ENCODE measurements at regions of chr12 and their contacts with region 1.

Region 1: DNA sequence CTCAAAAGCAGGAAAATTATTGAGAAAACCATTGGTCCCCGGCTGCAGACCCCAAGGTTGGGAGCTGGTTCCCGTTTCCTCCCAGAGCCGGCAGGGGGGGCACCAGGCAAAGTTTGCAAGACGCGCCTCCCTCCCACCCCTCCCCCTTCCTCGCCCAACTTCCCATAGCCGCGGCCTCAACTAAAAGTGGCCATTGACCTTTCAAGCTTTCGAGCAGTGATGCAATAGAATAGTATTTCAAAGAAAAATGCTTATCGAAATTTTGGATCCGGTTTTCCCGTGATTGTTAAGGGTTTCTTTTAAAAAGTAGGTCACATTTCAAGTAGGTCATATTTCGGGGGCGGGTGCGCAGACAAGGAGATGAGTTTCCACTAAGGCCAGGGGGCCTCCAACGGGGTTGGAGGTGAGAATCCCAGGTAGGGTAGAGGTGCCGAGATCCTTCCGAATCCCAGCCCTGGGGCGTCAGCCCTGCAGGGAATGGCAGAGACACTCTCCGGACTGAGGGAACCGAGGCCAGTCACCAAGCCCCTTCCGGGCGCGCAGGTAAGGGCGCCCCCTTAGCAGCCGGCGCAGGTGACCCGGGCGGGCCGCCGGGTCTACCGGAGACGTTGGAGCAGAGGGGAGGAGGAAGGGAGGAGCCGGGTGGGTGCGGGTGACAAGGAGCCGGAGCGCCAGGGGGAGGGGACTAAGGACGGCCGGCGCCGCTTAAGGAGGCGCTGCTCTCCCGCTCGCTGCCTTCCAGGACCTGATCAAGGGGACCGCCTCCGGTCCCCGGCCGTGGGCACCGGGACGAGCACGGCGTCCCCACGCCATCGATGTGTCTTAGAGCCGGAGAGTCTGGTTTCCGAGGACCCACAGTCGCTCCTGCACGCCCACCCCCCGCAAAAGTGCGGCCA is 2.6 kb upstream of the SOCS2 start:
- DNase-seq: peak; percentile 68
- H3K4me3 Mint-ChIP-seq: peak overlapping the region; percentile 88
- H3K27ac Mint-ChIP-seq: peak overlapping the region; percentile 77
- H3K4me1 Mint-ChIP-seq: peaks cover 42% of the 10 kb centered on the region
- H3K27me3 Mint-ChIP-seq: peaks cover 15% of the 10 kb centered on the region

Region 2: GRCh38 chr12:93042283-93042682 is 527.6 kb before region 1 on chr12:
- intact Hi-C with region 1: no loop called
- DNase-seq: no peak
- H3K4me3 Mint-ChIP-seq: no peak overlapping the region
- H3K27ac Mint-ChIP-seq: no peak overlapping the region
- H3K4me1 Mint-ChIP-seq: no peaks in the 10 kb centered on the region
- H3K27me3 Mint-ChIP-seq: no peaks in the 10 kb centered on the region

Region 3: DNA sequence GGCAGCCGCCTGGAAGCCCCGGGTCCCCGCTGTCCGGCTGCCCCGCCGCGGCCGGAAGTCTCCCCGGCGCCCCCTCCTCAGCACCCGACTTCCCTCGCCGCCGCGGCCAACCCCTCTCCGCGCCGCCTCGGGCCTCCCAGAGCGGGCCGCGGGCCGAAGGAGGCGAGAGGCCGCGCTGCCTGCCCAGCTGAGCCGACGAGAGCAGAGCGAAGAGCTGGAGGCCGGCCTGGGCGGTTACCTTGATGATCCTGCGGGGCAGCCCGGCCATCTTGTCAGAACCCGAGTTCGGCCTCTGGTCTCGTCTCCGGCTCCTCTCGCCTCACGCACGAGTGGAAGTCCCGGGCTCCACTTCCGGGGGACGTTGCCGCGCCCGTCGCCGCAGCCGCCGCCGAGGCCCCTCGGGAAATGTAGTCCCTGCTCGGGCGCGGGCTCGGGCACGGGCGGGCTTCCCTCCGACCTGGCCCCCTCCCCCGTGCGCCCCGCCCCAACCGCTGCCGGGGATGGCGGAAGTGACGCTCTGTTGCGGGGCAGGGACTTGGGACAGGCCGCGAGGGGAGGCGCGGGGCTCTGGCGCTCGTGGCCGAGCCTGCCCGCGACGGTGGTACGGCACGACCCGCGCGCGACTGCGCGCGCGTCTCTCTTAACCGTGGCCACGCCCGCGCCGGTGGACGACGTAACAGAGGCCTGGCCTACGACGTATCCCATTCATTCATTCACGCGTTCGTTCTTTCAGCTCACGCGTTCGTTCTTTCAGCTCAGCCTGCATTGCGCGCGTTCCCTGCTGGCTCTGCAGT is 128.1 kb before region 1 on chr12 and contains the start of gene UBE2N:
- intact Hi-C with region 1: loop called (anchors 1 kb)
- DNase-seq: peak; percentile 95
- H3K4me3 Mint-ChIP-seq: peak within 1 kb of the TSS; percentile 96
- H3K27ac Mint-ChIP-seq: peak within 1 kb of the TSS; percentile 99
- H3K4me1 Mint-ChIP-seq: peaks cover 51% of the 10 kb centered on the region
- H3K27me3 Mint-ChIP-seq: no peaks in the 10 kb centered on the region
- total RNA-seq, gene UBE2N: 231 and 239 TPM in 2 replicates

Region 4: DNA sequence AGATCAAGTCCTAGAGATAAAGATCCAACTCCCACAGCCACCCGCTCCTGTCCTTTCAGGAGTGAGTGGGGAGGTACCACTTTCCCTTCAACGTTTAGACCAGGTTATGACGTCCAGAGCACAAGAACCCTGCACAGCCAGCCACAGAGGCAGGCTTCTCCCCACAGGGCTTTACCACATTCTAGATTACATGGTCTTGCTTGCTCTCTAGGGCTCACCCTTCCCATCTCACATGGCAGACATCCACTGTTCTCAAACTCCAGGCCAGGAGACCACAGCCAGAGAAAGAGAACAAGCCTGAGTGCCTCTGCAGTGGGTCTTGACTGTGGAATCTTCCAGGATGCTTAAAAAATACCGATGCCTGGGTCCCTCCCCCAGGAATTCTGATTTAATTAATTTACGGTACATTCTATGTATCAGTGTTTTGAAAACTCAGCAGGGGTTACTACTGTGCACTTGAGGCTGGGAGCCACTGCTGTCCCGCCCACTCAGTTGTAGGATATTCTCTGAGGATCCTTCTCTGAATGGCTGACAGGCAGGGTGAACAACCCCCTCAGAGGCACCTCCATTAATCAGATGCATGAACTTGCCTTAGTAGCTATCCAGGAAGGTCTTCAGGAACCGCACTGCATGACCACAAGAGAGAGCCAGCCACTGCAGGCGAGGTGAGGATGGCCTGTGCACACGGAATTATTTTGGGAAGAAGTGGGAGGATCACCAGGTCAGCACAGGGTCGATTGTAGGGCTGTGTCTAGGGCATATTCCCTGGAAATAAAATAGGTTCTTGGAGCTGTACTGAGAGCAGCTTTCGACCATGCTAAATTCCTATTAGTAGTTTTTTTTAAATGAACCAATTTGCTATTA is 18.9 kb before region 1 on chr12:
- intact Hi-C with region 1: no loop called
- DNase-seq: no peak
- H3K4me3 Mint-ChIP-seq: no peak overlapping the region
- H3K27ac Mint-ChIP-seq: no peak overlapping the region
- H3K4me1 Mint-ChIP-seq: peaks cover 3% of the 10 kb centered on the region
- H3K27me3 Mint-ChIP-seq: no peaks in the 10 kb centered on the region

Region 5: DNA sequence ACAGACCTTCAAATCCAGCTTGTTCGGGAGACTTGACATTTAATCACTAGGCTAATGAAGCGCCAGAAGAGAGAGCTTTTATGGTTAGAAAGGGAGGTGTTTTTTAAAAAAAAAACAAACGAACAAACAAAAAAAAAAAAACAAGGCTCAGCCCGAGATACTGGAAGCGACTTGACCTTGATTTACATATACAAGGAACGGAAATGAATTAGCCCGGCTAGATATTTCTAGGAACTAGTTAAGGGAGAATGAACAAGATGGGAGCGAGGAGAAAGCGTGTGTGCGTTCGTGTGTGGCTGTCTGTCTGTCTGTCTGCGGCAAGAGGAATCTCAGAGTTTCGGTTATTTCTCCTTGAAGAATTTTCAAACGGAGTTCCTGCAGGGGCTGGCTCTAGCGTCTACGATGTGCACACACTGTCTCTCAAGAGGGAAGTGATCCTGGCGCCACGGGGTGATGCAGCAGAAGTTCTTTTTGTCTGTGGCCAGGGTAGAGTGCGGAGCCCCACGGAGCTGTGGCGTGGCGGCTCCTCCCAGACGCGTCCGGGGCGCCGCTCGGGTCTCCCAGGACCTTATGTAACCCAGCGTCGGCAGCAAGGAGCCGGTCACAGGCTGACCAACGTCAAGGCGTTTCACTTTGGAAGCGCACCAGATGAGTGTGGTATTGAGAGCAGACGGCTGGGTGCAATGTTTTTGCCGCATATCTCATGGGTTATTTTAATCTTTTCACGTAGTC is 21.4 kb after region 1 on chr12:
- intact Hi-C with region 1: loop called (anchors 1 kb)
- DNase-seq: no peak
- H3K4me3 Mint-ChIP-seq: peak overlapping the region; percentile 96
- H3K27ac Mint-ChIP-seq: peak overlapping the region; percentile 74
- H3K4me1 Mint-ChIP-seq: peaks cover 55% of the 10 kb centered on the region
- H3K27me3 Mint-ChIP-seq: peaks cover 34% of the 10 kb centered on the region

Region 6: GRCh38 chr12:93766796-93767523 is 197.1 kb after region 1 on chr12:
- intact Hi-C with region 1: loop called (anchors 1 kb)
- DNase-seq: peak; percentile 40
- H3K4me3 Mint-ChIP-seq: peak overlapping the region; percentile 0
- H3K27ac Mint-ChIP-seq: no peak overlapping the region
- H3K4me1 Mint-ChIP-seq: peaks cover 34% of the 10 kb centered on the region
- H3K27me3 Mint-ChIP-seq: peaks cover 6% of the 10 kb centered on the region

Region 7: GRCh38 chr12:93979189-93979588 is 409.3 kb after region 1 on chr12:
- intact Hi-C with region 1: loop called (anchors 1 kb)
- DNase-seq: peak; percentile 15
- H3K4me3 Mint-ChIP-seq: no peak overlapping the region
- H3K27ac Mint-ChIP-seq: no peak overlapping the region
- H3K4me1 Mint-ChIP-seq: peaks cover 42% of the 10 kb centered on the region
- H3K27me3 Mint-ChIP-seq: peaks cover 10% of the 10 kb centered on the region

Region 8: GRCh38 chr12:94644141-94644979 is 1074.5 kb after region 1 on chr12:
- intact Hi-C with region 1: loop called (anchors 5 kb)
- DNase-seq: no peak
- H3K4me3 Mint-ChIP-seq: peak overlapping the region; percentile 63
- H3K27ac Mint-ChIP-seq: peak overlapping the region; percentile 7
- H3K4me1 Mint-ChIP-seq: peaks cover 46% of the 10 kb centered on the region
- H3K27me3 Mint-ChIP-seq: peaks cover 68% of the 10 kb centered on the region